ENCODE measurements at regions of chr5 and their contacts with region 1.

Region 1: GRCh38 chr5:113612060-113612496 is 98.6 kb downstream of the YTHDC2 start:
- DNase-seq: peak in 1 of 2 experiments; percentile 6
- H3K4me3 ChIP-seq: no peak overlapping the region
- H3K4me3 Mint-ChIP-seq: no peak overlapping the region
- H3K27ac Mint-ChIP-seq: no peak overlapping the region
- H3K4me1 ChIP-seq: no peaks in the 10 kb centered on the region
- H3K4me1 Mint-ChIP-seq: no peaks in the 10 kb centered on the region
- H3K27me3 ChIP-seq: no peaks in the 10 kb centered on the region
- H3K27me3 Mint-ChIP-seq: peaks cover 6% of the 10 kb centered on the region
- CTCF ChIP-seq: peak; percentile 17 to 27

Region 2: GRCh38 chr5:112995764-112996618 is 616.1 kb before region 1 on chr5:
- CTCF ChIA-PET with region 1: no interaction called
- POLR2A ChIA-PET with region 1: no interaction called
- intact Hi-C with region 1: no loop called
- DNase-seq: peak; percentile 60 to 75
- H3K4me3 ChIP-seq: no peak overlapping the region
- H3K4me3 Mint-ChIP-seq: no peak overlapping the region
- H3K27ac Mint-ChIP-seq: no peak overlapping the region
- H3K4me1 ChIP-seq: no peaks in the 10 kb centered on the region
- H3K4me1 Mint-ChIP-seq: no peaks in the 10 kb centered on the region
- H3K27me3 ChIP-seq: no peaks in the 10 kb centered on the region
- H3K27me3 Mint-ChIP-seq: no peaks in the 10 kb centered on the region
- CTCF ChIP-seq: peak; percentile 81 to 90

Region 3: GRCh38 chr5:113663880-113664541 is 51.9 kb after region 1 on chr5:
- CTCF ChIA-PET with region 1: interaction called, 47 read pairs
- POLR2A ChIA-PET with region 1: no interaction called
- intact Hi-C with region 1: loop called (anchors 1 kb)
- DNase-seq: peak; percentile 42 to 66
- H3K4me3 ChIP-seq: no peak overlapping the region
- H3K4me3 Mint-ChIP-seq: no peak overlapping the region
- H3K27ac Mint-ChIP-seq: no peak overlapping the region
- H3K4me1 ChIP-seq: no peaks in the 10 kb centered on the region
- H3K4me1 Mint-ChIP-seq: no peaks in the 10 kb centered on the region
- H3K27me3 ChIP-seq: no peaks in the 10 kb centered on the region
- H3K27me3 Mint-ChIP-seq: peaks cover 12% of the 10 kb centered on the region
- CTCF ChIP-seq: peak; percentile 41 to 65

Region 4: DNA sequence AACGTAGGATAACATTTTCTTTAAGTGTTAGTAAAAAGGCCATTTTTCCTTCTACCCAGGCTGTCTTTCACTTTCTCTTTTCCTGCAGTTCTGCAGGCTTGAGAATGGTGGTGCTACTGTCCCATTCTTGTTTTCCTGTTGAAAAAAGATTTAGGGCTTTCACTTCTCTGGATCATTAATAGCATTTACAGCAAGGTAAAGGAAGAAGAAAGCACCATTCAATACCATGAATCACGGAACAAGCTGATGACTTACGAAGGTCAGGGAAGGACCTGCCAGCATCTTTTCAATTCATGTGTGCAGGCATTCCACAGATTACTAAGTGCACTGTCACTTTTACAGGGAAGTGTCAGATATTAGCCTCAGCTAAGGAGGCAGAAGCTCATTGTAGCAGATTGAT is 194.2 kb after region 1 on chr5:
- CTCF ChIA-PET with region 1: no interaction called
- POLR2A ChIA-PET with region 1: no interaction called
- intact Hi-C with region 1: loop called (anchors 5 kb)
- DNase-seq: no peak
- H3K4me3 ChIP-seq: no peak overlapping the region
- H3K4me3 Mint-ChIP-seq: no peak overlapping the region
- H3K27ac Mint-ChIP-seq: no peak overlapping the region
- H3K4me1 ChIP-seq: no peaks in the 10 kb centered on the region
- H3K4me1 Mint-ChIP-seq: no peaks in the 10 kb centered on the region
- H3K27me3 ChIP-seq: no peaks in the 10 kb centered on the region
- H3K27me3 Mint-ChIP-seq: peaks cover 3% of the 10 kb centered on the region
- CTCF ChIP-seq: peak in 1 of 2 experiments; percentile 8

Region 5: GRCh38 chr5:114305402-114306211 is 693.5 kb after region 1 on chr5:
- CTCF ChIA-PET with region 1: no interaction called
- POLR2A ChIA-PET with region 1: no interaction called
- intact Hi-C with region 1: loop called (anchors 1 kb)
- DNase-seq: peak in 1 of 2 experiments; percentile 2
- H3K4me3 ChIP-seq: no peak overlapping the region
- H3K4me3 Mint-ChIP-seq: no peak overlapping the region
- H3K27ac Mint-ChIP-seq: no peak overlapping the region
- H3K4me1 ChIP-seq: no peaks in the 10 kb centered on the region
- H3K4me1 Mint-ChIP-seq: no peaks in the 10 kb centered on the region
- H3K27me3 ChIP-seq: no peaks in the 10 kb centered on the region
- H3K27me3 Mint-ChIP-seq: peaks cover 6% of the 10 kb centered on the region
- CTCF ChIP-seq: peak; percentile 1 to 30

Region 6: DNA sequence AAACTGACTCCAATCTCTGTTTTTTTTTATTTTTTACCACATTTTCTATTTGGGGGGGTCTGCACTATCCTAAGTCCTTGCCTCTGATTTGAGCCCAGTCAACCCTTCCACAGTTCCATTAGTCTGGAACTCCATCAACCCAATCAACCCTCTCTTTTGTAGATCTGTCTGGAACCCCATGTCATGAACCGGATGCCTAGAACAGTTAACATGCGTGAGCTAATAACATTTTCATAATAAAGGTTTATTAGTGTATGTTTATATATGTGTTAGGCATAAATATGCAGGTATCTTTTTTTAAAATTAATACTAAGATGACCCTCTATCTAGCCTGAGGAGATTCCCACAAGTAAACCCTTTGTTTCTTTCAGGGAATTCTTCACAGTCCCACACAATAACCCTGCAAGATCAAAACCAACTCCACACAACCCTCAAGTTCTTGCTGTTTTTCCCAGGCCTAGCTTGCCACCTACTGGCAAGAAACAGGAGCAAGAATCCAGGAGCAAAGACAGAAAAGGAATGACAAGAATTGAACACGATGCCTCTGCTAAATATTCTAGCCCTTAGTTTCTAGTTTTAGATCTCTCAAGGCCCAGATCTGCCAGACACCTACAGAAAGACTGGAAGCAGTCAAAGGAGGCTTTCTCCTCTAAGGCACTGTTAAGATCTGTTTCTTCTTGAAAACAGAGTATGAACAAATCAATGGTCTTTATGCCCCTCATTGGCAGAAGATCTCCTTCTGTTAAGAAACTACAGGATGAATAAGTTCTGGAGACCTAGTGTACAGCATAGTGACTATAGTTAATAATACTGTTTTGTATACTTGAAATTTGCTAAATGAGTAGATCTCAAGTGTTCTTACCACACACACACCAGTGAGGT is 1457.2 kb after region 1 on chr5:
- CTCF ChIA-PET with region 1: interaction called, 12 read pairs
- POLR2A ChIA-PET with region 1: no interaction called
- intact Hi-C with region 1: loop called (anchors 2 kb)
- DNase-seq: peak; percentile 47 to 49
- H3K4me3 ChIP-seq: no peak overlapping the region
- H3K4me3 Mint-ChIP-seq: peak overlapping the region; percentile 63
- H3K27ac Mint-ChIP-seq: no peak overlapping the region
- H3K4me1 ChIP-seq: no peaks in the 10 kb centered on the region
- H3K4me1 Mint-ChIP-seq: no peaks in the 10 kb centered on the region
- H3K27me3 ChIP-seq: no peaks in the 10 kb centered on the region
- H3K27me3 Mint-ChIP-seq: peaks cover 4% of the 10 kb centered on the region
- CTCF ChIP-seq: peak; percentile 66 to 81

Measured in Caco-2 (cell line).